Left ventricle myocardium inferior (tissue), 1 donor: ENCODE measurements at regions of chr3 and their contacts with region 1.

Region 1: DNA sequence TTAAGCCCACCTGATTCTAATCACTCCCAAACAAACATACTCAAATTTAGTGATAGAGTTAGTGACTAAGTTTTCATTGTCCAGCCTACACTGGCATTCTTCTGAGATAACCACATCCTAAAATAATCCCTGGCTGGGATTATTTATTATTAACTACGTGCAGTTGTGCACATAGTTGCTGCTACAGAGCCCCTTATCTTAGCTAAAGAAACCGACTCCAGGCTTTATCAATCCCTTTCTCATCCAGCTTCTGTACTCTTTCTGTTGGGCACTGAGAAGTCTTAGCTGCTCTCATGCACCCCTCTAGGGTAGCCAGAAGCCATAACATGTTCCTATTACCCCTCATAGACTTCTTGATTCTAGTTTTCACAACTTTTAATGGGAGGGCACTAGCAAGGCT is 208.7 kb downstream of the MBNL1 start:
- DNase-seq: no peak
- H3K4me3 ChIP-seq: no peak overlapping the region
- H3K27ac ChIP-seq: no peak overlapping the region
- H3K4me1 ChIP-seq: peaks cover 12% of the 10 kb centered on the region
- H3K27me3 ChIP-seq: no peaks in the 10 kb centered on the region
- CTCF ChIP-seq: no peak

Region 2: GRCh38 chr3:152281133-152281713 is 196.2 kb before region 1 on chr3:
- intact Hi-C with region 1: no loop called
- DNase-seq: no peak
- H3K4me3 ChIP-seq: peak overlapping the region; percentile 47
- H3K27ac ChIP-seq: peak overlapping the region; percentile 99
- H3K4me1 ChIP-seq: peaks cover 98% of the 10 kb centered on the region
- H3K27me3 ChIP-seq: no peaks in the 10 kb centered on the region
- CTCF ChIP-seq: no peak

Region 3: GRCh38 chr3:152291649-152292066 is 185.8 kb before region 1 on chr3:
- intact Hi-C with region 1: no loop called
- DNase-seq: no peak
- H3K4me3 ChIP-seq: peak overlapping the region; percentile 18
- H3K27ac ChIP-seq: peak overlapping the region; percentile 71
- H3K4me1 ChIP-seq: peaks cover 95% of the 10 kb centered on the region
- H3K27me3 ChIP-seq: no peaks in the 10 kb centered on the region
- CTCF ChIP-seq: no peak

Region 4: GRCh38 chr3:152524198-152525140 is 47.0 kb after region 1 on chr3:
- intact Hi-C with region 1: loop called (anchors 5 kb)
- DNase-seq: no peak
- H3K4me3 ChIP-seq: no peak overlapping the region
- H3K27ac ChIP-seq: no peak overlapping the region
- H3K4me1 ChIP-seq: no peaks in the 10 kb centered on the region
- H3K27me3 ChIP-seq: no peaks in the 10 kb centered on the region
- CTCF ChIP-seq: peak; percentile 97

Region 5: GRCh38 chr3:152595975-152596790 is 118.8 kb after region 1 on chr3:
- intact Hi-C with region 1: no loop called
- DNase-seq: no peak
- H3K4me3 ChIP-seq: peak overlapping the region; percentile 46
- H3K27ac ChIP-seq: peak overlapping the region; percentile 89
- H3K4me1 ChIP-seq: peaks cover 32% of the 10 kb centered on the region
- H3K27me3 ChIP-seq: no peaks in the 10 kb centered on the region
- CTCF ChIP-seq: no peak

Region 6: GRCh38 chr3:152737021-152737908 is 259.8 kb after region 1 on chr3:
- intact Hi-C with region 1: no loop called
- DNase-seq: no peak
- H3K4me3 ChIP-seq: no peak overlapping the region
- H3K27ac ChIP-seq: no peak overlapping the region
- H3K4me1 ChIP-seq: peaks cover 15% of the 10 kb centered on the region
- H3K27me3 ChIP-seq: no peaks in the 10 kb centered on the region
- CTCF ChIP-seq: no peak